ENCODE measurements at regions of chr18 and their contacts with region 1.

Region 1: DNA sequence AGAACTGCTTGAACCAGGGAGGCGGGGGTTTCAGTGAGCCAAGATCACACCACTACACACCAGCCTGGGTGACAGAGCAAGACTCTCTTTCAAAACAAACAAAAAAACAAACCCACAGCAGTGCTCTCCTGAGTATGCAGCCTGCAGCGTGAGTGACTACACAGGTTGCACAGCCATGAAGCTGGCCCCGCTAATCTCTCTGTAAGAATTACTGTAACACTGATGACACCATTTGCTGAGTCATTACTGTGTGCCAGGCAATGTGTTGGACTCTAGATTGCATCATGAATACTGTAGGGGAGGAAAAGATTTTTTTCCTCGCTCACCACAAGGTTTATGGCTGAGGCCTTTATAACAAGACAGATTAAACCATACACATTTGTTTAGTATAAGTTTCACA is 118.6 kb upstream of the ATP8B1 start:
- DNase-seq: peak; percentile 56
- H3K4me3 ChIP-seq: no peak overlapping the region
- H3K27ac ChIP-seq: no peak overlapping the region
- H3K4me1 ChIP-seq: peaks cover 16% of the 10 kb centered on the region
- H3K27me3 ChIP-seq: no peaks in the 10 kb centered on the region
- CTCF ChIP-seq: no peak

Region 2: DNA sequence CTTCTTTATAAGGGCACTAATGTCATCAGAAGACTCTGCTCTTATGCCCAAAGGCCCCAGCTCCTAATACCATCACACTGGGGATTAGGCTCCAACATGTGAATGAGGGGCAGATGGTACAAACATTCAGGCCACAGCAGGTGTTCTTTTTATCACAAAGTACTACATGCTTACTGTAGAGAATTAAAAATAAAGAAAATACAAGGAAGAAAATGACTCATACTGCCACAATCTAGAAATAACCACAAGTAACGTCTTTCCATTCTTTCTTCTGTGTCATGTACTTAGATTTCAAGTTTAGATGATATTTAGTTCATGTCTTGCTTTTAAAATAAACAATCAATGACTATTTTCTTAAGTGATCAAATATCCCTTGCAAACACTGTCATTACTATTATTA is 22.0 kb after region 1 on chr18:
- CTCF ChIA-PET with region 1: no interaction called
- dilution Hi-C with region 1: no loop called
- in situ Hi-C with region 1: no loop called
- intact Hi-C with region 1: loop called (anchors 2 kb)
- DNase-seq: peak; percentile 52
- H3K4me3 ChIP-seq: no peak overlapping the region
- H3K27ac ChIP-seq: peak overlapping the region; percentile 31
- H3K4me1 ChIP-seq: peaks cover 44% of the 10 kb centered on the region
- H3K27me3 ChIP-seq: no peaks in the 10 kb centered on the region
- CTCF ChIP-seq: no peak